K562 (cell line): ENCODE measurements at regions of chr10 and their contacts with region 1.

Region 1: DNA sequence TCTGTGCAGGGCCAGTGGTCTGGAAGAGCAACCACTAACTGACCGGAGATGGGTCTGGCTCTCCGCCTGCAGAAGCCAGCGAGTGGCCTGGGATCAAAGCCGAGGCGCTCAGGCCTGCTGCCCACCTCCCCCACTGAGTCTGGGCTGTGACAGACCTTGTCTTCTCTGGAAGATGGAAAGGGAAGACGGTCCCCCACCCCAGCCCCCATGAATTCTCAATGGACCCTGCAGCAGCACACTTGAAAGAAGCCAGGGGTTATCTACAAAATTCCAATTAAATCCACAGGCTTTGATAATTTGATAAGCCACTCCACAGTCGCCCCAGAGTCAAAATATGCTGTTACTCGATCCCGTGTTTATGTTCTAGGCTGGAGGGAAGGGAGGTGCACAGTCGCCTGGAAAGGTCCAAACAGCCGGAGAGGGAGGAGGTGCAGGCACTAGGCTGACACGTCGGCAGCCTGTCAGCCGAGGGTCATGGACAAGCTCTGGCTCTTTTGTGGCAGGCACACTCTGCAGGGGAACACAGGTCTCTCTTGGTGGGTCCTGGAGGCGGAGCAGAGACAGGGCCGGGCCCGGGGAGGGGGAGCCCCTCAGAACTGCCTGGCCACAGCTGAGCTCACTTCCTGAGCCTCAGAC is 134.9 kb downstream of the SH3PXD2A start:
- DNase-seq: no peak
- ATAC-seq: no peak
- H3K4me3 ChIP-seq: no peak overlapping the region
- H3K27ac ChIP-seq: no peak overlapping the region
- H3K4me1 ChIP-seq: no peaks in the 10 kb centered on the region
- H3K27me3 ChIP-seq: peaks cover 4 to 41% of the 10 kb centered on the region in 2 experiments; a peak in 4 of 5 replicates
- CTCF ChIP-seq: no peak
- EP300 ChIP-seq: no peak
- POLR2A ChIP-seq: no peak
- RAD21 ChIP-seq: no peak

Region 2: DNA sequence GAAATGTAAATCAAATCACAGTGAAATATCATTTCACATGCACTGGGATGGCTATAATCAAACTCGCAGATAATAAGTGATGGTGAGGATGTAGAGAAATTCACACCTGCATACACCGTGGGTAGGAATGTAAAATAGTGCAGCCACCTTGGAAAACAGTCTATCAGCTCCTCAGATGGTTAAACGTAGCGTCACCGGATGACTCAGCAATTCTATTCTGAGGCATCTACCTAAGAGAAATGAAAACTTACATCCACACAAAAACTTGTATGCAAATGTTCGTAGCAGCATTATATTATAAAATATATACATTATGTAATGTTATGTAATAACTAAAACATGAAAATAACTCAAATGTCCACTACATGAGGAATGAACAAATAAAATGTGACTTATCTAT is 96.0 kb after region 1 on chr10:
- CTCF ChIA-PET with region 1: no interaction called
- POLR2A ChIA-PET with region 1: no interaction called
- in situ Hi-C with region 1: no loop called
- intact Hi-C with region 1: no loop called
- DNase-seq: peak in 1 of 4 experiments; percentile 59
- ATAC-seq: peak; percentile 60; the same call in 2 of the 3 replicates
- H3K4me3 ChIP-seq: no peak overlapping the region
- H3K27ac ChIP-seq: no peak overlapping the region
- H3K4me1 ChIP-seq: no peaks in the 10 kb centered on the region
- H3K27me3 ChIP-seq: peaks cover 4 to 37% of the 10 kb centered on the region in 2 experiments; a peak in 3 of 5 replicates
- CTCF ChIP-seq: no peak
- EP300 ChIP-seq: no peak
- POLR2A ChIP-seq: no peak
- RAD21 ChIP-seq: no peak

Region 3: GRCh38 chr10:103833731-103834365 is 113.4 kb after region 1 on chr10:
- CTCF ChIA-PET with region 1: no interaction called
- POLR2A ChIA-PET with region 1: no interaction called
- in situ Hi-C with region 1: no loop called
- intact Hi-C with region 1: no loop called
- DNase-seq: peak in 2 of 4 experiments; percentile 10 to 14
- ATAC-seq: no peak; the same call in 2 of the 3 replicates
- H3K4me3 ChIP-seq: no peak overlapping the region
- H3K27ac ChIP-seq: no peak overlapping the region
- H3K4me1 ChIP-seq: no peaks in the 10 kb centered on the region; a peak in 3 of 5 replicates
- H3K27me3 ChIP-seq: peaks cover 4 to 25% of the 10 kb centered on the region in 2 experiments; a peak in 4 of 5 replicates
- CTCF ChIP-seq: no peak
- EP300 ChIP-seq: no peak
- POLR2A ChIP-seq: no peak
- RAD21 ChIP-seq: no peak

Region 4: DNA sequence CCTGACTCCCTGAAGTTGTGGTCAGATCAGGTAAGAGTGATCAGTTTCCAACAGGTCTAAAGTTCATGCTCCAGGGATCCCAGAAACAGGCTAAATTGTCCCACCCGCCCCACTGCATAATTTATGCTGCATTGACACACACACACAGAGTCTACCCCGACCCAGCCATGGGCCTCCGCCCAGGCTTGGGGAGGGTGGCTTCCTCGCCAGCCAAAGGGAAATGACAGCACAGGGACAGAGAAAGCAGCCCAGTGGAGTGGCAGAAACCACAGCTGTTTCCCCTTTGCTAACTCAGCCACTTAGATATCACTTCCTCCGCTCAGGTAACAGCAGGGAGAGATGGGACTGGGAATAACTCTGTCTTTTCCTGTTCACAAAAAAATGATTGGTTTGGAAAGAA is 125.5 kb after region 1 on chr10:
- CTCF ChIA-PET with region 1: no interaction called
- POLR2A ChIA-PET with region 1: no interaction called
- in situ Hi-C with region 1: loop called (anchors 5 kb)
- intact Hi-C with region 1: no loop called
- DNase-seq: no peak
- ATAC-seq: no peak
- H3K4me3 ChIP-seq: no peak overlapping the region
- H3K27ac ChIP-seq: no peak overlapping the region
- H3K4me1 ChIP-seq: no peaks in the 10 kb centered on the region
- H3K27me3 ChIP-seq: peaks cover 5 to 39% of the 10 kb centered on the region in 2 experiments
- CTCF ChIP-seq: no peak
- EP300 ChIP-seq: no peak
- POLR2A ChIP-seq: no peak
- RAD21 ChIP-seq: no peak